ENCODE measurements at regions of chr3 and their contacts with region 1.

Region 1: GRCh38 chr3:42652611-42653302 is 740 bp upstream of the ZBTB47 start:
- DNase-seq: peak; percentile 66
- H3K4me3 ChIP-seq: peak overlapping the region; percentile 81
- H3K27ac ChIP-seq: peak overlapping the region; percentile 96
- H3K4me1 ChIP-seq: peaks cover 76% of the 10 kb centered on the region
- H3K27me3 ChIP-seq: no peaks in the 10 kb centered on the region
- CTCF ChIP-seq: no peak

Region 2: GRCh38 chr3:42547401-42547945 is 105.3 kb before region 1 on chr3:
- intact Hi-C with region 1: no loop called
- DNase-seq: peak; percentile 67
- H3K4me3 ChIP-seq: no peak overlapping the region
- H3K27ac ChIP-seq: peak overlapping the region; percentile 61
- H3K4me1 ChIP-seq: peaks cover 36% of the 10 kb centered on the region
- H3K27me3 ChIP-seq: no peaks in the 10 kb centered on the region
- CTCF ChIP-seq: peak; percentile 98

Region 3: GRCh38 chr3:42590989-42591756 is 61.6 kb before region 1 on chr3:
- intact Hi-C with region 1: loop called (anchors 10 kb)
- DNase-seq: no peak
- H3K4me3 ChIP-seq: peak overlapping the region; percentile 77
- H3K27ac ChIP-seq: peak overlapping the region; percentile 85
- H3K4me1 ChIP-seq: peaks cover 24% of the 10 kb centered on the region
- H3K27me3 ChIP-seq: no peaks in the 10 kb centered on the region
- CTCF ChIP-seq: no peak

Region 4: DNA sequence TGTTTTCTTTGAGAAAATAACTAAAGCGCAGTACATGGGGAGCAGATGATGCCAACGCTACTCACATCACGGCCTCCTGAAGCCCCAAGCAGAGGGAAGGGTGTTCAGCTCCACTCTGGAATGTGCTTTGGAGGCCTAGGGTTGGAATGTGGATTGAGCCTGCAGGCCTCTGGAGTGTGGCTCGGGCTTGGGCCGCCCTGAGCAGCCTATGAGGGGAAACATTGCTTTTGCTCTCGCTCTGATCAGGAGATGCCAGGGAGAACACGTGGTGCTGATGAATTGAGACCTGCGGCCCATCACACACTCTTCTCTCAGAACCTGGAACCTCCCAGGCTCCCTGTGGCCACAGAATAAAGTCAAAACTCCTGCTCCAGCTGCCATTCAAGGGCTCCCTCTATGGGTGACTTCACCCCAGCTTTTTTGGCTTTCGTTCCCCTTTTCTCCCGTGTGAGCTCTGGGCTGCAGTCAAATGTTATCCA is 97.0 kb after region 1 on chr3:
- intact Hi-C with region 1: loop called (anchors 10 kb)
- DNase-seq: no peak
- H3K4me3 ChIP-seq: no peak overlapping the region
- H3K27ac ChIP-seq: peak overlapping the region; percentile 11
- H3K4me1 ChIP-seq: peaks cover 30% of the 10 kb centered on the region
- H3K27me3 ChIP-seq: no peaks in the 10 kb centered on the region
- CTCF ChIP-seq: peak; percentile 58

Region 5: GRCh38 chr3:42819351-42819965 is 166.7 kb after region 1 on chr3:
- intact Hi-C with region 1: no loop called
- DNase-seq: no peak
- H3K4me3 ChIP-seq: no peak overlapping the region
- H3K27ac ChIP-seq: no peak overlapping the region
- H3K4me1 ChIP-seq: peaks cover 14% of the 10 kb centered on the region
- H3K27me3 ChIP-seq: no peaks in the 10 kb centered on the region
- CTCF ChIP-seq: no peak

Measured in left ventricle myocardium inferior (tissue), 1 donor.